IMR-90 (cell line): ENCODE measurements at regions of chr2 and their contacts with region 1.

Region 1: GRCh38 chr2:236343400-236344161 is 79.4 kb upstream of the ASB18 start:
- DNase-seq: peak; percentile 75
- ATAC-seq: peak; percentile 84
- H3K4me3 ChIP-seq: no peak overlapping the region
- H3K27ac ChIP-seq: no peak overlapping the region
- H3K4me1 ChIP-seq: no peaks in the 10 kb centered on the region
- H3K27me3 ChIP-seq: peaks cover 4% of the 10 kb centered on the region
- CTCF ChIP-seq: peak; percentile 79
- POLR2A ChIP-seq: no peak
- RAD21 ChIP-seq: peak; percentile 62

Region 2: GRCh38 chr2:235766278-235766677 is 577.3 kb before region 1 on chr2:
- CTCF ChIA-PET with region 1: no interaction called
- POLR2A ChIA-PET with region 1: no interaction called
- dilution Hi-C with region 1: no loop called
- in situ Hi-C with region 1: no loop called
- intact Hi-C with region 1: loop called (anchors 5 kb)
- DNase-seq: peak; percentile 74
- ATAC-seq: peak; percentile 96
- H3K4me3 ChIP-seq: no peak overlapping the region
- H3K27ac ChIP-seq: no peak overlapping the region
- H3K4me1 ChIP-seq: no peaks in the 10 kb centered on the region
- H3K27me3 ChIP-seq: no peaks in the 10 kb centered on the region
- CTCF ChIP-seq: peak; percentile 89
- POLR2A ChIP-seq: no peak
- RAD21 ChIP-seq: peak; percentile 79